B cell (primary cell): ENCODE measurements at regions of chr4 and their contacts with region 1.

Region 1: DNA sequence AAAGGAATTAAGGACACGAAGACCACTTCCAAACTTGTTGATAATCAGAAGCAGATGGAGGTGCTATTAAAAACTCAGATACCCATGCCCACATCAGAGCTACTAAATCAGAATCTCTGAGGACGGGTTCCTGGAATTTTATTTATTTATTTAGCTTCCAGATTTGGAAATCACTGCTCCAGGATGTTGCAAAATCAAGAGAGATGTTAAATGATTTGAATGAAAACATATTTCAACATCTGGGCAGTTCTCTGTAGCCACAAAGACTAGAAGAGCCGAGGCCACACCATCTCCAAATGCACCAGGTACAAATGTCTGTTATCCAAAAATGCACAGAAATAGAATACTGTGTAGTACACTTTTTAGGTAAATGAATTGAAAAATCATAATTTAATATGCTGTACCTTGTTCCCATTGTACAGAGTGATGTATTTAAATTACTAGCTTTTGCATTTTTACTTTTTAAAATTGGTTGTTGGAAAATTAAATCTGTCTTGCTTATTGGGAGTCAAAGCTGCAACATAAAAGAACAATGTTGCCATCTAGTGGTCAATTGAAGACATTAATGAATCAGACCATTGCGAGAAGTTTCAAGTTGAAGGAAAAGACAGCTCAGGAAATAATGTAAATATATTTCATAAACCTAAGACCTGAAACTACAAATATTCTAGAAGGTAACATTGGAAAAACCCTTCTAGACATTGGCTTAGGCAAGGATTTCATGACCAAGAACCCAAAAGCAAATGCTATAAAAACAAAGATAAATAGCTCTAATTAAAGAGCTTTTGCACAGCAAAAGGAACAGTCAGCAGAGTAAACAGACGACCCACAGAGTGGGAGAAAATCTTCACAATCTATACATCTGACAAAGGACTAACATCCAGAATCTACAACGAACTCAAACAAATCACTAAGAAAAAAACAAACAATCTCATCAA is 151.3 kb upstream of the TTC29 start:
- DNase-seq: peak; percentile 63
- ATAC-seq: no peak
- H3K4me3 ChIP-seq: no peak overlapping the region
- H3K4me3 Mint-ChIP-seq: no peak overlapping the region
- H3K27ac ChIP-seq: no peak overlapping the region
- H3K27ac Mint-ChIP-seq: no peak overlapping the region
- H3K4me1 ChIP-seq: peaks cover under 1% of the 10 kb centered on the region in 2 donors
- H3K4me1 Mint-ChIP-seq: peaks cover under 1% of the 10 kb centered on the region
- H3K27me3 ChIP-seq: peaks cover 0 to 4% (median 4%) of the 10 kb centered on the region in 4 experiments
- H3K27me3 Mint-ChIP-seq: peaks cover 31% of the 10 kb centered on the region
- CTCF ChIP-seq: peak; percentile 81

Region 2: DNA sequence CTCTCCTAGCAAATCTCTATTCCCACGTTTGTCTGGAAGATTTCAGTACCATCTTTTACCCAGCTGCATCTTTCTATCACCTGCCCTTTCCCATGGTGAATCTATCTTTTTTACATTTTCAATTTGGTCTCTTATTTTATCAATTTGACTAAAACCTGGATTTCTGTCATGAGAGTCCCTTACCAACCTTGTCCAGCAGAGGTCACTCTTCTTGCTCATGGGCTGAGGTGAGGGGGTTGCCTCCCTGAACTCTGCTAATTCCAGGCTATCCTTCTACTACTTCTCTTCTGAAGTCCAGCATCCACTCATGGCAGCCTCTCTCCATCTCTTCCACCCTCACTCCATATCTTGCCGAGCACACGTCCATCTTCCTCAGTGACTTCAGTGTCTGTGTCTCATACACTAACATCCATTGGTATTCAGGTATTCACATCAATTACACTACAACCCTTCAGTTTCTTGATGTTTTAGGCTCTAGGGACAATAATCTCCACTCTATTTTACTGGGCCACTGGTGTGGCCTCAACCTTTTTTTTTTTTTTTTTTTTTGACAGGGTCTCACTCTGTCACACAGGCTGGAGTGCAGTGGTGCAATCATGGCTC is 1140.5 kb before region 1 on chr4:
- CTCF ChIA-PET with region 1: no interaction called
- POLR2A ChIA-PET with region 1: no interaction called
- intact Hi-C with region 1: loop called (anchors 5 kb)
- DNase-seq: peak; percentile 78
- ATAC-seq: peak; percentile 61
- H3K4me3 ChIP-seq: no peak overlapping the region
- H3K4me3 Mint-ChIP-seq: no peak overlapping the region
- H3K27ac ChIP-seq: no peak overlapping the region
- H3K27ac Mint-ChIP-seq: no peak overlapping the region
- H3K4me1 ChIP-seq: peaks cover 5 to 6% of the 10 kb centered on the region in 2 donors
- H3K4me1 Mint-ChIP-seq: peaks cover 6% of the 10 kb centered on the region
- H3K27me3 ChIP-seq: no peaks in the 10 kb centered on the region
- H3K27me3 Mint-ChIP-seq: no peaks in the 10 kb centered on the region
- CTCF ChIP-seq: peak; percentile 86

Region 3: DNA sequence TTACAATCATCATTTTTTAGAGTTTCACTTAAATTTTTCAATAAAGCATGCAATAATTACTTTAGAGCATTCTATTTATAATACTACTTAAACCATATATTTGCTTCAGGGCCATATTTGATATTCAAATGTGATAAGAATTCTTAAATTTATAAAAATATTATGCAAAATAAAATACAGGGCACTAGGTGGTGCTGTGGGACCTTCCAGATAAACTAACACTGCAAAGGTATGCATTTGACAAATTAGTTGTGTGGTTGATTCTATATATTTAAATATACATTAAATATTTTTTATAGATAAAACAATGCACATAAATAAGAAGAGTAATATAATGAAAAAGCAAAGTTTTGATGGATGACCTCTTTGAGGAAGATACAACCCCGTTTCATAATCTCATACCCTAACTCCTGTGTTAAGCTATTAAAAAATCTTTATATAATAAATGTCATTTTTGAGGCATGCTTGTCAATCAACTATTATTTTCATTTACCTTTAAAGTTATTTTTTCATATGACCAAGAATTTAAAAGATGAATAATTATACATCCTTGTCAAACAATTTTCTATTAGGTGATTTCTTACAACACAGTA is 754.2 kb before region 1 on chr4:
- CTCF ChIA-PET with region 1: interaction called, 96 read pairs
- POLR2A ChIA-PET with region 1: no interaction called
- intact Hi-C with region 1: loop called (anchors 1 kb)
- DNase-seq: peak; percentile 33
- ATAC-seq: no peak
- H3K4me3 ChIP-seq: no peak overlapping the region
- H3K4me3 Mint-ChIP-seq: no peak overlapping the region
- H3K27ac ChIP-seq: no peak overlapping the region
- H3K27ac Mint-ChIP-seq: no peak overlapping the region
- H3K4me1 ChIP-seq: peaks cover 3 to 5% of the 10 kb centered on the region in 2 donors
- H3K4me1 Mint-ChIP-seq: peaks cover 9% of the 10 kb centered on the region
- H3K27me3 ChIP-seq: no peaks in the 10 kb centered on the region
- H3K27me3 Mint-ChIP-seq: no peaks in the 10 kb centered on the region
- CTCF ChIP-seq: peak; percentile 88

Region 4: GRCh38 chr4:147019061-147019460 is 77.9 kb before region 1 on chr4:
- CTCF ChIA-PET with region 1: interaction called, 166 read pairs
- POLR2A ChIA-PET with region 1: no interaction called
- intact Hi-C with region 1: loop called (anchors 1 kb)
- DNase-seq: peak; percentile 65
- ATAC-seq: peak; percentile 31
- H3K4me3 ChIP-seq: no peak overlapping the region
- H3K4me3 Mint-ChIP-seq: no peak overlapping the region
- H3K27ac ChIP-seq: no peak overlapping the region
- H3K27ac Mint-ChIP-seq: no peak overlapping the region
- H3K4me1 ChIP-seq: no peaks in the 10 kb centered on the region
- H3K4me1 Mint-ChIP-seq: no peaks in the 10 kb centered on the region
- H3K27me3 ChIP-seq: no peaks in the 10 kb centered on the region
- H3K27me3 Mint-ChIP-seq: peaks cover 5% of the 10 kb centered on the region
- CTCF ChIP-seq: peak; percentile 75

Region 5: DNA sequence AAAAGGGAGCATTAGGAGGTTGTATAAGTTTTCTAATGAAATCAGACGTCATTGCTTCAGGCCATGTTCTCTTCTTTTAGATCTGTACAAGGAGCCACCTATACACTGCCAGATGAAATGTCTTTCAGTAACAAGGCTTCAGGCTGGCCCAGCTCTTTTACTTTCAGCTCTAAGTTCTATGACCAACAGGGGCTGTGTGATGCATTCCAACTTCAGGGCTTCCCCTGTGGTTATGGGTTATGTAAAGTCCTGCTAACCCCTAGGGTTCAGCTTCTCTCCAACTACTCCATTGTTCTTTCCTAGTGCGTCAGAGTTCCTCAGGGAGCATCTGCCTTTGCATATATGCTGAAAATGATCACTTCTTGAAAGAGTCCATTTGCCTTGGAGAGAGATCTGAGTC is 71.9 kb before region 1 on chr4:
- CTCF ChIA-PET with region 1: interaction called, 166 read pairs
- POLR2A ChIA-PET with region 1: no interaction called
- intact Hi-C with region 1: no loop called
- DNase-seq: no peak
- ATAC-seq: no peak
- H3K4me3 ChIP-seq: no peak overlapping the region
- H3K4me3 Mint-ChIP-seq: no peak overlapping the region
- H3K27ac ChIP-seq: no peak overlapping the region
- H3K27ac Mint-ChIP-seq: no peak overlapping the region
- H3K4me1 ChIP-seq: no peaks in the 10 kb centered on the region
- H3K4me1 Mint-ChIP-seq: no peaks in the 10 kb centered on the region
- H3K27me3 ChIP-seq: no peaks in the 10 kb centered on the region
- H3K27me3 Mint-ChIP-seq: peaks cover 3% of the 10 kb centered on the region
- CTCF ChIP-seq: no peak

Region 6: GRCh38 chr4:147084861-147085260 is 12.1 kb before region 1 on chr4:
- CTCF ChIA-PET with region 1: interaction called, 14 read pairs
- POLR2A ChIA-PET with region 1: no interaction called
- intact Hi-C with region 1: no loop called
- DNase-seq: no peak
- ATAC-seq: no peak
- H3K4me3 ChIP-seq: no peak overlapping the region
- H3K4me3 Mint-ChIP-seq: no peak overlapping the region
- H3K27ac ChIP-seq: no peak overlapping the region
- H3K27ac Mint-ChIP-seq: no peak overlapping the region
- H3K4me1 ChIP-seq: no peaks in the 10 kb centered on the region
- H3K4me1 Mint-ChIP-seq: no peaks in the 10 kb centered on the region
- H3K27me3 ChIP-seq: peaks cover 0 to 4% (median 0%) of the 10 kb centered on the region in 4 experiments
- H3K27me3 Mint-ChIP-seq: peaks cover 12% of the 10 kb centered on the region
- CTCF ChIP-seq: no peak

Region 7: GRCh38 chr4:147108409-147108808 is 11.5 kb after region 1 on chr4:
- CTCF ChIA-PET with region 1: interaction called, 16 read pairs
- POLR2A ChIA-PET with region 1: no interaction called
- intact Hi-C with region 1: no loop called
- DNase-seq: no peak
- ATAC-seq: no peak
- H3K4me3 ChIP-seq: no peak overlapping the region
- H3K4me3 Mint-ChIP-seq: no peak overlapping the region
- H3K27ac ChIP-seq: no peak overlapping the region
- H3K27ac Mint-ChIP-seq: no peak overlapping the region
- H3K4me1 ChIP-seq: no peaks in the 10 kb centered on the region
- H3K4me1 Mint-ChIP-seq: no peaks in the 10 kb centered on the region
- H3K27me3 ChIP-seq: peaks cover 0 to 2% (median 0%) of the 10 kb centered on the region in 4 experiments
- H3K27me3 Mint-ChIP-seq: peaks cover 15% of the 10 kb centered on the region
- CTCF ChIP-seq: no peak

Region 8: GRCh38 chr4:147312376-147313046 is 215.6 kb after region 1 on chr4:
- CTCF ChIA-PET with region 1: no interaction called
- POLR2A ChIA-PET with region 1: no interaction called
- intact Hi-C with region 1: no loop called
- DNase-seq: no peak
- ATAC-seq: no peak
- H3K4me3 ChIP-seq: no peak overlapping the region
- H3K4me3 Mint-ChIP-seq: no peak overlapping the region
- H3K27ac ChIP-seq: no peak overlapping the region
- H3K27ac Mint-ChIP-seq: no peak overlapping the region
- H3K4me1 ChIP-seq: no peaks in the 10 kb centered on the region
- H3K4me1 Mint-ChIP-seq: no peaks in the 10 kb centered on the region
- H3K27me3 ChIP-seq: no peaks in the 10 kb centered on the region
- H3K27me3 Mint-ChIP-seq: no peaks in the 10 kb centered on the region
- CTCF ChIP-seq: no peak